Psoas muscle (tissue), 8 donors: ENCODE measurements at regions of chr18 and their contacts with region 1.

Region 1: GRCh38 chr18:23629444-23629946 is 33.2 kb downstream of the ANKRD29 start:
- DNase-seq: no peak
- ATAC-seq: no peak
- H3K4me3 ChIP-seq: no peak overlapping the region
- H3K27ac ChIP-seq: no peak overlapping the region
- H3K4me1 ChIP-seq: peaks cover 21% of the 10 kb centered on the region
- H3K27me3 ChIP-seq: no peaks in the 10 kb centered on the region
- CTCF ChIP-seq: no peak

Region 2: DNA sequence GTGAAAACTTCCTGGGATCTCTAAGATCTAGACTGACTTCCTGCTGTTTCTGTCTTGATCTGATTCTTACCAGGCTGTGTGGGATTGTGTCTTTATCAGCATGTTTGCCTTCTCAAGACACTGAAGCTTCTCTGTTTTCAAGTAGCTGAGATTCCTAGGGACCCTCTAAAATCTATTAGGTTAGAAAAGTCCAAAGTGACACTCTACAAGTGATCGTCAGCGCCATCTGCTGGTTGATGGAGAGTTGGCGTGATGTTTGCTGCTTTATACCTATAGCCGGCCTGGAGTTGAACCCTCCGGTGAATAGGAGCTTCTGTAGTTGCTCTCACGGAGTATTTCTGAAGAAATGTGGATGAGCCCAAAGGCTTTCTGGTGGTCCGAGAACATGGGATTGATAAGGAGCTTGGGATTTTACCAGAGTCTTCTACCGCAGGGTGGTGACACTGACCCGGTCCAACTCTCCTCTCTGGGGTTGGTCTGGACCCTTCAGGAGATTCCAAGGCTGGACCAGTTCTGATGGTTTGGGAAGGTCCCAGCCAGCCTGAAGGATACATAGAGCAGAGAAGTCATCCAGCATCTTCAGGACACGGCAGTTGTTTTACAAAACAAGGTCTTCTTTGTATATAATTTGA is 289.0 kb after region 1 on chr18:
- intact Hi-C with region 1: loop called (anchors 10 kb)
- DNase-seq: peak; percentile 69 to 79
- ATAC-seq: peak in 3 of 4 donors; percentile 58 to 80 (median 68)
- H3K4me3 ChIP-seq: no peak overlapping the region
- H3K27ac ChIP-seq: no peak overlapping the region
- H3K4me1 ChIP-seq: no peaks in the 10 kb centered on the region
- H3K27me3 ChIP-seq: no peaks in the 10 kb centered on the region
- CTCF ChIP-seq: peak; percentile 73

Region 3: GRCh38 chr18:23924813-23925212 is 295.3 kb after region 1 on chr18:
- intact Hi-C with region 1: loop called in 1 of 2 experiments (anchors 10 kb)
- DNase-seq: no peak
- ATAC-seq: peak in 2 of 4 donors; percentile 41 to 49
- H3K4me3 ChIP-seq: no peak overlapping the region
- H3K27ac ChIP-seq: no peak overlapping the region
- H3K4me1 ChIP-seq: no peaks in the 10 kb centered on the region
- H3K27me3 ChIP-seq: no peaks in the 10 kb centered on the region
- CTCF ChIP-seq: no peak